B cell (primary cell): ENCODE measurements at regions of chr4 and their contacts with region 1.

Region 1: DNA sequence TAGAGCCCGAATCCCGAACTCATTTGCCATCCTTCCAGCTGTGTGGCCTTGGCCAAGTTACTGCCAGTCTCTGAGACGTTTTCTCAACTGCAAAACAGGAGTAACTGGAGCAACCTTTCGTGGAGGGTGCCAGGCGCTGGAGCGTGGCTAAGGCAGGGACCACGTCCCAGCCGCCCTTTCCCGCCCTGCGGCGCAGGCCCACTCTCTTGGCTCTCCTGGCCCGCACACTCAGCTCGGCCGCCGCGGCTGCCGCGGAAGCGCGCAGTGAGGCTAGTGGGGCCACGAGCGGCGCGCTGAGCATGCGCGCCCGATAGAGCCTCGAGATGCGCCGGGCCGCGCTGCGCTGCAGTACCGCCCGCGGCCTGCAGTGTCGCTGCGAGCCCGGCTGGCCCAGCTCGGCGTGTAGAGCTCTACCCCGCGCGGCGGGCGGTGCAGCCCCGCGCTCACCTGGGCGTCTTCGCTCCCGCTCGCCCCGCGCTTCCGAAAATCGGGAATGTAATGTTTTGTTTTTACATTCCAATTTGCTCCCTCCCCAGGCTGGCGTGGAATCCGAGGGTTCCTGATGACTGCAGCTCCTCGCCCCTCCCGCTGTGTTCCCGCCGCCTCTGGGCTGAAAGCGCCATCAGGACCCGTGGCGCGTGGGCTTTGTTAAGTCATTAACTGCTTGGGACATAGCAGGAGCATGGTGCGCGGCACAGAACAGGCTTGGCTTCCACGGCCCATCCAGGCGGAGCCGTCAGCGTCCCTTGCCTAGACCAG is 4.0 kb upstream of the ZNF518B start:
- DNase-seq: peak; percentile 91
- ATAC-seq: peak; percentile 82
- H3K4me3 ChIP-seq: peak overlapping the region; percentile 27 to 62 (median 48)
- H3K4me3 Mint-ChIP-seq: peak overlapping the region; percentile 82
- H3K27ac ChIP-seq: no peak overlapping the region
- H3K27ac Mint-ChIP-seq: no peak overlapping the region
- H3K4me1 ChIP-seq: peaks cover 13 to 25% of the 10 kb centered on the region in 2 donors
- H3K4me1 Mint-ChIP-seq: peaks cover 21% of the 10 kb centered on the region
- H3K27me3 ChIP-seq: peaks cover 0 to 40% (median 17%) of the 10 kb centered on the region in 4 experiments
- H3K27me3 Mint-ChIP-seq: peaks cover 48% of the 10 kb centered on the region
- CTCF ChIP-seq: peak; percentile 99

Region 2: GRCh38 chr4:10157478-10158332 is 303.6 kb before region 1 on chr4:
- CTCF ChIA-PET with region 1: no interaction called
- POLR2A ChIA-PET with region 1: no interaction called
- intact Hi-C with region 1: loop called (anchors 10 kb)
- DNase-seq: peak; percentile 59
- ATAC-seq: peak; percentile 76
- H3K4me3 ChIP-seq: no peak overlapping the region
- H3K4me3 Mint-ChIP-seq: no peak overlapping the region
- H3K27ac ChIP-seq: no peak overlapping the region
- H3K27ac Mint-ChIP-seq: no peak overlapping the region
- H3K4me1 ChIP-seq: no peaks in the 10 kb centered on the region
- H3K4me1 Mint-ChIP-seq: peaks cover 5% of the 10 kb centered on the region
- H3K27me3 ChIP-seq: peaks cover 0 to 13% (median 10%) of the 10 kb centered on the region in 4 experiments
- H3K27me3 Mint-ChIP-seq: peaks cover 43% of the 10 kb centered on the region
- CTCF ChIP-seq: peak; percentile 78

Region 3: DNA sequence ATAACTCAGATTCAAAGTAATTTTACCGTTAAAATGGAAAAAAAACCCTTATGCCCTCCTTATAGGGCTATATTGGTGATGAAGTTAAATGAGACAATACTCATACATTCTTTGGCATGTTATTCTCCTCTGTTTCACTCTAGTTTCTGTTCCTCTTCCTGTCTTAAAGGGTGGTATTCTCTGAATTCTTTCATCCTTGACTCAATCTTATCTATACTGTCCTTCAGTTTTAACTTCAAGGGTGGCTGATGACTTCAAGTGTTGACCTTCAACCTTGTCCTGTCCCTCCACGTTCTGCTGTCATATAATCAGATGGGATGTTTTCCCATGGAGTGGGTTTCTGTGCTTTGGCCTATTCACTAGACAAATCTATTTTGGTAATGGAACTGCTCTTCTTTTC is 48.1 kb before region 1 on chr4:
- CTCF ChIA-PET with region 1: no interaction called
- POLR2A ChIA-PET with region 1: no interaction called
- intact Hi-C with region 1: loop called (anchors 5 kb)
- DNase-seq: peak; percentile 59
- ATAC-seq: peak; percentile 83
- H3K4me3 ChIP-seq: no peak overlapping the region
- H3K4me3 Mint-ChIP-seq: peak overlapping the region; percentile 64
- H3K27ac ChIP-seq: no peak overlapping the region
- H3K27ac Mint-ChIP-seq: peak overlapping the region; percentile 76
- H3K4me1 ChIP-seq: peaks cover 31 to 34% of the 10 kb centered on the region in 2 donors
- H3K4me1 Mint-ChIP-seq: peaks cover 47% of the 10 kb centered on the region
- H3K27me3 ChIP-seq: no peaks in the 10 kb centered on the region
- H3K27me3 Mint-ChIP-seq: no peaks in the 10 kb centered on the region
- CTCF ChIP-seq: no peak